Tibial artery (tissue), 4 donors: ENCODE measurements at regions of chr6 and their contacts with region 1.

Region 1: DNA sequence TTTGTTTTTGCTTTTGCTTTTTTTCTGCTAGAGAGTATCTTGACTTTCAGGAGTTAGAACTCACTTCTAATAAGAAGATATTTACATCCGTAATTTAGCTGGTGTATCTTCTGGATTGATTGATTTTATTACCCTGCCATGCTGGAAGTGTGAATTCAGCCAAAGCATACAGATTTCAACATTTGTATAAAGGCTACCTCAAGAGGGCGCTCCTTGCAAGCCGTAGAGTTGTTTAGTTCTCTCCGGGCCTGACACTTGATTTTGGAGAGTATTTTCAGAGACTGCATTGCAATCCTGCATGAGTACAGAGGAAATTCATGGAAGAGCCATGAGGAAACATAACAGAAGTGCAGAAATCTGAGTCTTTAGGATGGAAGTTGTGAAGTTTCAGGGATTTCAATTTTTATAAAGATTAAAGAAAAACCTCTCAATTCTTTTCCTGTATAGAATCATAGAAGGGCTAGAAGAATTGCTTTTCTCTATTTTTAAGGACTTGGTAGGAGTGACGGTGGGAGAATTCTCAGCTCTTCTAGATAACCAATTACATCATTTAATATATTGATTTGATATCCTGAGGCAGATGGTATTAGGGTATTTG is 66.7 kb upstream of the TIAM2 start:
- DNase-seq: peak in 1 of 2 donors; percentile 55
- H3K4me3 ChIP-seq: no peak overlapping the region
- H3K27ac ChIP-seq: no peak overlapping the region
- H3K4me1 ChIP-seq: peaks cover 0 to 9% (median 3%) of the 10 kb centered on the region in 4 donors
- H3K27me3 ChIP-seq: no peaks in the 10 kb centered on the region
- CTCF ChIP-seq: peak; percentile 67 to 82

Region 2: GRCh38 chr6:154767003-154767723 is 161.3 kb before region 1 on chr6:
- intact Hi-C with region 1: no loop called
- DNase-seq: no peak
- H3K4me3 ChIP-seq: no peak overlapping the region
- H3K27ac ChIP-seq: no peak overlapping the region
- H3K4me1 ChIP-seq: peaks cover 0 to 75% (median 27%) of the 10 kb centered on the region in 4 donors
- H3K27me3 ChIP-seq: no peaks in the 10 kb centered on the region
- CTCF ChIP-seq: no peak

Region 3: DNA sequence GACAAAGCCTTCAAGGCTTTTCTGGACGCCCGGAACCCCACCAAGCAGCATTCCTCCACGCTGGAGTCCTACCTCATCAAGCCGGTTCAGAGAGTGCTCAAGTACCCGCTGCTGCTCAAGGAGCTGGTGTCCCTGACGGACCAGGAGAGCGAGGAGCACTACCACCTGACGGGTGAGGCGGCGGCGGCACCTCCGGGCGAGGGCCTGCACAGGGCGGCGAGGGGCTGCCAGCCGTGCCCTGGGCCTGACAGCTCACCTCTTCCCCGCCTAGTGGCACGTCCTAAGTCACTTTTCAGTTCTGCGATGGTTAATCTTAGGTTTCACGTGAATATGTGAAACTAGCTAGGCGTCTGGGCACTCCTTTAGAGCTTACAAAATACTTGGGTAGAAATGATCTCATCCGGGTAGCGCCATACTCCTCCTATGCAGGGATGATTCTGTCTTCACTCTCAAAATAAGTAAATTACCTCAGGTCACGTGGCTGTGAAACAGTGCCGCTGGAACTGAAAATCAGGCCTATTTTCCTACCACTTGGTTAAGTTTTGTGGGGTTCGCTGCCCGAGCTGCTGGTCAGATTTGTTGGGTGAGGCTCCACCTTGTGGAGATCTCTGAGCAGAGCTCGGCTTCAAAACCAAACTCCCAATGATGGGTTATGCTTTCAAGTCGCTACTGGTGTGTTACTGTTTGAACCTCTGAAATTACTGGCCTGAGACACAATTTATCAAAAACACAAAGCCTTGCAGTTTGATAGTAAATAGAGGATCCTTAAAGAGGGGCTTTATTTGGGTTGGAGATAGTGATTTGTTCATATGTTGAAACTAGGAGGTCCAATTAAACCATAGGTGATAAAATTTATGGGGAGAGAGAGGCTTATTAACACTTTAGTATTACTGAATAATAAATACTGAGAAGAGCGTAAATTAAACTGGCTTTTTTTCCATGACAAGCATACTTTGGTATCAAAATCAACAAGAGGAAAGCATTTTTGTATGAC is 319.9 kb after region 1 on chr6:
- intact Hi-C with region 1: loop called (anchors 5 kb)
- DNase-seq: peak in 1 of 2 donors; percentile 31
- H3K4me3 ChIP-seq: no peak overlapping the region
- H3K27ac ChIP-seq: peak overlapping the region in 1 of 2 donors; percentile 17
- H3K4me1 ChIP-seq: peaks cover 0 to 18% (median 4%) of the 10 kb centered on the region in 4 donors
- H3K27me3 ChIP-seq: no peaks in the 10 kb centered on the region
- CTCF ChIP-seq: peak; percentile 68 to 71